Posterior vena cava (tissue), 2 donors: ENCODE measurements at regions of chr16 and their contacts with region 1.

Region 1: DNA sequence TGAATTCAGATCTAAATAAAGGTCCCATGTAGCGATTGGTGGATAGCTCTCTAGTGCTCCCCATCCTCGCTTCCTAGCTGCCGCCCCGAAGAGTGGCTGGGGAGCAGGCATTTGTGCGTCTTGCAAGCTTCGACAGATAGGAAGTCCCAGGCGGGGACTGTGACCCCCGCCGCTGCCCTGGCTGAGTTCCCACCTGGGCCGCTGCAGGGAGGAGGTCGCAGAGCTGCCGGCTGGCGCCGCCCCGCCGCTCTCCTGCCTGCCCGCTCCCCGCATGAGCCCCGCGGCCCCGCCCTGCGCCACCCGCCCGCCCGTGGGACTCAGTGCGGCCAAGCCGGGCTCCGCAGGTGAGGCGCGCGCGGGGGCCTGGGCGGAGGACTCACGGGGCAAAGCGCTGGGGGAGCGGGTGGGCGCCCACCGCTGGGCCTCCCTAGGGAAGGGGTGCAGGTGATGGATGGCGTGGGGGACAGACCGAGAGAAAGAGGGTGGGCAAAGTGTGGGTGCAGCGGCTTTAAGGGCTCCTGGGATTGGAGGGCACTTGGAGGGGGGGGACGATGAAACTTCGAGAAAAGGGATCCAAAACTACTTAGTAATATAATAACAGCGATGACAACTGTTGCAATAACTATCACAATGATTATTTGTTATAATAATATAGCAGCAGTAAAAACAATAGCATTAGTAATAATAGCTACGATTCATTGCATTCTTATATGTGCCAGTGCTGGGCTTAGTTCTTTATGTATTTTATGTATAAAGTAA is at the start of gene OTOA:
- DNase-seq: no peak
- total RNA-seq, gene OTOA: 0.32 to 0.33 TPM

Region 2: DNA sequence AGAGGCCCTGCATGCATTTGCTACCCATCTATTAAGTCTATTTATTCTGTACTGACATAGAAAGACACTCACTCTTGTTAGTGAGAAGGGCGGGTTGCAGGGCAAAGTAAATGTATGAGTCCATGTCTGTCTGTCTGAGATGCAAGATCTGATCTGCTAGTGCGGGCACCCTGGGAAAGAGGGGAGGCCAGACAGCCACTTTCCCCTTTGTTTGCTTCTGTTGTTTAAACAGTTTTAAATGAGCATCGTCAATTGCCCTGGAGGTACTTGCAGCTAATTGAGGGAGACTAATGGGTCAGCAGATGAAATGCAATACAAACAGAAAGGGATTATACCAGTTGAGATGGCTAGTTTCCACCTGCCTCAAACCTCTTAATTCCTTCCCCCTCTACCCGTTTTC is 1543.4 kb after region 1 on chr16:
- intact Hi-C with region 1: loop called in 1 of 2 experiments (anchors 10 kb)
- DNase-seq: no peak